ENCODE measurements at regions of chr3 and their contacts with region 1.

Region 1: DNA sequence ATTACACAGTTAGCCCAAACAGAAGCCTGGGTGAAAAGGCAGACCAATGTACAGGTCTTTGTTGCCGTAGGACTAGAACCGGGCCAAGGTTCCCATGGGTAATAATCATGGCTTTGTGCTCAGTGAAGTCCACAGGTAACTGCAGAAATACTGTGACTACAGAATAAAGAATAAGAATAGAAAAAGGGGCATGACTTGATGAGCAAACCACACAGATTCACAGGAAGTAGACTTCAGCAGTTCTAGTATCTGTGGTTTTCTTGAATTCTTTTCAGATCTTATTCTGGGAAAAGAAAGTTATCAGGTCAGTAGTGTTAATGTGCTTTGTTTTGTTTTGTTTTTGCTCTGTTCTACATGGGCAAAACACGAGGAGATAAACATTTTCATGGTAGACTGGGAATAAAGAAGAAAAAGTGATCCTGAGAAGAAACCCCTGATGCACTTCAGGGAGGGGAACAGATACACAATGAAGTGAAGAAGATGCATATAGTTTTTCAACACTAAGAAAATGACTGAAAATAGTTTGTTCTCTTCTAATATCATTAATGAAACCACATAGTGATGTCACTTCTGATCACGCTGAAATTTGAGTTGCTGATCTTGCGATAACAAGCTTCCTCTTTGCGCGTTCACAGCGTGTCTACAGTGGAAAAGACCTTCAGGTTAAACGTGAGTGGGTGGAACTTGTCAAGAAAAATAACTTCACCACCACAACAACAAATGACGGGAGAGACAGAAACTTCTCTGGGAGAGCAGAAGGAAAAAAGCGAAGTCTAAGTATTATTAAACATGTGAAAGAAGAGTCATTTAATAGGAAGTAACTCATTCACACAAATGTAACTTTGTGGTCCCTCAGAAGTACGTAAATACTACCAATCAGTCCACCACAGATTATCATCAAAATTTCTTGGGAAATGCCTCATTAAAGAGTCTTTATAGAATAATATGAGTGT is 315.8 kb upstream of the SATB1 start:
- DNase-seq: peak; percentile 76
- ATAC-seq: peak; percentile 36
- H3K4me3 Mint-ChIP-seq: peak overlapping the region; percentile 58
- H3K27ac Mint-ChIP-seq: peak overlapping the region; percentile 94
- H3K4me1 Mint-ChIP-seq: peaks cover 94% of the 10 kb centered on the region
- H3K27me3 Mint-ChIP-seq: no peaks in the 10 kb centered on the region

Region 2: GRCh38 chr3:17742108-17742879 is 998.6 kb before region 1 on chr3 and contains the start of gene TBC1D5:
- CTCF ChIA-PET with region 1: no interaction called
- POLR2A ChIA-PET with region 1: no interaction called
- intact Hi-C with region 1: loop called in 1 of 2 experiments (anchors 10 kb)
- DNase-seq: peak; percentile 97
- ATAC-seq: peak; percentile 97
- H3K4me3 Mint-ChIP-seq: peak within 1 kb of the TSS; percentile 93
- H3K27ac Mint-ChIP-seq: peak within 1 kb of the TSS; percentile 93
- H3K4me1 Mint-ChIP-seq: peaks cover 40% of the 10 kb centered on the region
- H3K27me3 Mint-ChIP-seq: no peaks in the 10 kb centered on the region
- total RNA-seq, gene TBC1D5: 53.9 to 56.9 TPM

Region 3: DNA sequence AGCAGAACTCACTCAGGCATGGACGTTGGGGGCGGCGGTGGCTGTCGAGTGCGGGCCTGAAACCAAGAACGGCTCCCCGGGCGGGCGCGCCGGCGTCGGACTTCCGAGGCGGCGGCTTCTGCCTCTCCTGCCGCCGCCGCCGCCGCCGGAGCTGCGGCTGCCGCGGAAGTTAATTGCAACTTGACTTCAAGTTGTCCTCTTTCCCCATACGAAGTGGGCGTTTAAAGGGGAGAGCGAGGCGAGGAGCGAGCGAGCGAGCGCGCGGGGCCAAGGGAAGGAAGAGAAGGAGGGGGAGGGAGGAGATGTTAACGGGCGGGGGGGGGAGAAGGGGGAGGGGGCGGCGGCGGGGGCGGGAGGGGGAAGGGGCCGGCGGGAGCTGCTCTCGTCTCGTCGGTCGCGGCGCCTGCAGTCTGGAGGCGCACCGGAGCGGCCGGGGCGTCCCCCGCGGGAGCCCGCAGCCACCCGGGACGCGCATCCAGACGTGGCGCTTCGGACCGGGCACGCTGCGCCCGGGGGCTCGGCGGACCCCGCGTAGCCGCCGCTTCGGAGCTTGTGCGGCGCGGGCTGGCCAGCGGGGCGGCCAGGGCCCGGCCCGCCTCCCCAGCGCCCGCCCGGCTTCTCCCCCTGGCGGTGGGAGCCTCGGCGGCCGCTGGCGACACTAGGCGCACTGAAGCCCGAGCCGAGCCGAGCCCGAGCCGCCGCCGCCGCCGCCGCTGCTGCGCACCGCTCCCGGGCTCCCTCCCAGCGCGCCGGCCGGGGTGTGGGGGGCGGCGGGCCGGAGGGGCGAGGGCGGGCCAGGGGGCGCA is 296.1 kb before region 1 on chr3:
- CTCF ChIA-PET with region 1: interaction called, 4 read pairs
- POLR2A ChIA-PET with region 1: interaction called, 14 read pairs
- intact Hi-C with region 1: loop called (anchors 1 kb)
- DNase-seq: peak; percentile 89
- ATAC-seq: peak; percentile 66
- H3K4me3 Mint-ChIP-seq: peak overlapping the region; percentile 96
- H3K27ac Mint-ChIP-seq: peak overlapping the region; percentile 91
- H3K4me1 Mint-ChIP-seq: peaks cover 25% of the 10 kb centered on the region
- H3K27me3 Mint-ChIP-seq: no peaks in the 10 kb centered on the region

Region 4: DNA sequence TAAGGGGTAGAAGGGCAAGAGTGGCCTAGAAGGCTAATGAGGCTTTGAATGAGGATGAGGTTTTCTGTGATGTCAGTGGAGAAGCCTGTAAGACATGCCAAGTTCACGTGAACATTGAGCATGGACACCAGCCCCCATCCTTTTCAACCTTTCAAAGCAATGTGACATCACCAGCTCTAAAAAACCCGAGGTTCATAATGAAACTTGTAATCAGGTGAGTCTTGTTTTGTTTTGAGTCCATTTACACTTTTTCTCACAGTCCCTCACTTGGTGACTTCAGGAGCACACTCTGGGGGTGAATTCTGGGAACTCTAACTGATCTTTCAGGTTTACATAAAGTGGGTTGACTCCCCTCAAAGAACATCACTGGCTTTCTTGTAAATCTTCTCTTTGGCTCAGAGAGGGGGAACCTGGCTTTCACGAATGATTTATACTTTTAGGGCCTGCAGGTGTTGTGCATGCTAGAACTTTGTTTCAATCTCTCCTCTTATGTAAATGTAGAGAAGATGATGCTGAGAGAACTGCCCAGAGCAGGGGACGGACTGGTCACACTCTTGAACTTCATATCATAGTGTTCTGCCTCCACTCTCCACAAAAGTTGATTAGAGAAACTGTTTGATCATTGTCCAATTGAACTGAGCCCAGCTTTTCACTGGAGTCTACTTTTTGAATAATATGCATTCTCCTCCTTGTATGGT is 91.1 kb before region 1 on chr3:
- CTCF ChIA-PET with region 1: interaction called, 11 read pairs
- POLR2A ChIA-PET with region 1: interaction called, 66 read pairs
- intact Hi-C with region 1: loop called (anchors 1 kb)
- DNase-seq: peak; percentile 80
- ATAC-seq: peak; percentile 79
- H3K4me3 Mint-ChIP-seq: peak overlapping the region; percentile 34
- H3K27ac Mint-ChIP-seq: peak overlapping the region; percentile 98
- H3K4me1 Mint-ChIP-seq: peaks cover 84% of the 10 kb centered on the region
- H3K27me3 Mint-ChIP-seq: no peaks in the 10 kb centered on the region

Region 5: GRCh38 chr3:18717598-18717997 is 23.3 kb before region 1 on chr3:
- CTCF ChIA-PET with region 1: interaction called, 53 read pairs
- POLR2A ChIA-PET with region 1: interaction called, 23 read pairs
- intact Hi-C with region 1: loop called (anchors 1 kb)
- DNase-seq: no peak
- ATAC-seq: peak; percentile 38
- H3K4me3 Mint-ChIP-seq: peak overlapping the region; percentile 8
- H3K27ac Mint-ChIP-seq: peak overlapping the region; percentile 97
- H3K4me1 Mint-ChIP-seq: peaks cover 71% of the 10 kb centered on the region
- H3K27me3 Mint-ChIP-seq: no peaks in the 10 kb centered on the region

Region 6: GRCh38 chr3:18752273-18752934 is 11.5 kb after region 1 on chr3:
- CTCF ChIA-PET with region 1: interaction called, 19 read pairs
- POLR2A ChIA-PET with region 1: interaction called, 3 read pairs
- intact Hi-C with region 1: loop called (anchors 1 kb)
- DNase-seq: no peak
- ATAC-seq: peak; percentile 91
- H3K4me3 Mint-ChIP-seq: no peak overlapping the region
- H3K27ac Mint-ChIP-seq: peak overlapping the region; percentile 39
- H3K4me1 Mint-ChIP-seq: peaks cover 81% of the 10 kb centered on the region
- H3K27me3 Mint-ChIP-seq: no peaks in the 10 kb centered on the region

Region 7: DNA sequence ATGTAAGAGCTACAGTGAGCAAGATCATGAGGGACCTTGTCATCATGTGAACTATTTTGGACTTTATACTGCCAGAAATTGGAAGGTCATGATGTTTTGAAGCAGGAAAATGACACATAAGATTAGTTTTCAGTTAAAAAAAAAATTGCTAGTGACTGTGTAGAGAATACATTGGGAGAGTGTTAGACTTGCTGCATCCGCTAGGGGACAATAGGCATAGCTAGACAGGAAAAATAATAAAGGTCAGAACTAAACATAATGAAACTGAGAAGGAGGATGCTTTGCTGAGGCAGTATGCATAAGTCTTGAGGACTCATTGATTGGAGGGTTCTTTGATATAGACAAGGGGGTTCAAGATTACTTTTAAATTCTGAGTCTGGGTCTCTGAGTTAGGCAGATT is 131.6 kb after region 1 on chr3:
- CTCF ChIA-PET with region 1: interaction called, 3 read pairs
- POLR2A ChIA-PET with region 1: no interaction called
- intact Hi-C with region 1: loop called (anchors 1 kb)
- DNase-seq: no peak
- ATAC-seq: peak; percentile 43
- H3K4me3 Mint-ChIP-seq: no peak overlapping the region
- H3K27ac Mint-ChIP-seq: peak overlapping the region; percentile 20
- H3K4me1 Mint-ChIP-seq: peaks cover 67% of the 10 kb centered on the region
- H3K27me3 Mint-ChIP-seq: peaks cover 2% of the 10 kb centered on the region

Region 8: DNA sequence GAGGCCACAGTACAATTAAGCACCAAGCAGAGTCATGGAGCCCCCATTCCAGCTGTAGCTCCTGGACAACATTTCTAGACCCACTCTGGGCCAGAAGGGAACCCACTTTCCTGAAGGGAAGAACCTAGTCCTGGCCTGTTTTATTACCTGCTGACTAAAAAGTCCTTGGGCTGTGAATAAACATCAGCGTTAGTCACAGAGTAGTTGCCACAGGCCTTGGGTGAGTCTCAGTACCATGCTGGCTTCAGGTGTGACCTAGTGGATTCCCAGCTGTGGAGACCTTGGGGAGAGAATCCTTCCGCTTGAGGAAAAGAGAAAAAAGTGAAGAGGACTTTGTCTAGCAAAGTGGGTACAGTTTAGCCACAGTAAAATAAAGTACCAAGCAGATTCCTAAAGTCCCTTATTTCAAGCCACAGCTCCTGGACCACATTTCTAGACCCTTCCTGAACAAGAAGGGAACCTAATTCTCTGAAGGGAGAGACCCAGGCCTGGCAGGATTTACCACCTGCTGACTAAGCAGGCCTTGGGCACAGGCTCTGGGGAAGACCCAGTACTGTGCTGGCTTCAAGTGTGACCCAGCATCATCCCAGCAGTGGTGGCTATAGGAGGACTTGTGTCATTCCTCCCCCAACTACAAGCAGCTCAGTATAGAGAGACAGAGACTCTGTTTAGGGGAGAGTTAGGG is 289.1 kb after region 1 on chr3:
- CTCF ChIA-PET with region 1: no interaction called
- POLR2A ChIA-PET with region 1: no interaction called
- intact Hi-C with region 1: no loop called
- DNase-seq: peak; percentile 33
- ATAC-seq: peak; percentile 84
- H3K4me3 Mint-ChIP-seq: no peak overlapping the region
- H3K27ac Mint-ChIP-seq: no peak overlapping the region
- H3K4me1 Mint-ChIP-seq: peaks cover 4% of the 10 kb centered on the region
- H3K27me3 Mint-ChIP-seq: peaks cover 5% of the 10 kb centered on the region